BJ (cell line): ENCODE measurements at regions of chr1 and their contacts with region 1.

Region 1: GRCh38 chr1:37449936-37450335 is 24.4 kb upstream of the ZC3H12A start:
- DNase-seq: no peak
- H3K4me3 ChIP-seq: no peak overlapping the region
- H3K27me3 ChIP-seq: no peaks in the 10 kb centered on the region
- CTCF ChIP-seq: no peak

Region 2: DNA sequence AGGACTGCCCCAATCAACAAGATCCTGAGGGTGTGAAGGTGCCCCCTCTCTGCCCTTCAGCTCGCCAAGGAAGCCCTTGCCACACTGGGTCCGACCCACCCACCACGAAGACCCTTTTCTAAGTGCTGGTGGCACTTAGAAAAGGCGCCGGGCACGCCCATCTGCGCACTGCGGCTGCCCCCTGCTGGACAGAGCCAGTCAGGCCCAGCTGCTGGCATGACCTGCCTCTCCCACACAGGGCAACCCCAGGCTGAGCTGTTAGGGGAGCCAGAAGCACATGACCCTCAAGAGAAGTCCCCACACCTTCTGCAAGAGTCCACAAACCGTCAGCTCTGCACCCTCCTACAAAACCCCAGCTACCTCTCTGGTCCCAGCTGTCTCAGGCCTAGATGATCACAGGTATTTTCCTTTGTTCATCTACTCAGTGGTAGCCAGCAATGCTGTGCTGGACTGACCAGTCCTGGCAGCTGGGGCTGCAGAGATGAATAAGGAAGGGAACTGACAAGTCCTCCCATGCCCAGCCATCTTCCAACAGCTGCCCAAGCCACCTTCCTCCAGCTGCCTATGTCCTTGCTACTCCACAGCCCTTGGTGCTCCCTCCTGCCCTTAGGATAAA is 15.5 kb before region 1 on chr1:
- CTCF ChIA-PET with region 1: interaction called, 31 read pairs
- POLR2A ChIA-PET with region 1: no interaction called
- DNase-seq: no peak
- H3K4me3 ChIP-seq: no peak overlapping the region
- H3K27me3 ChIP-seq: peaks cover 9% of the 10 kb centered on the region
- CTCF ChIP-seq: peak; percentile 97

Region 3: GRCh38 chr1:37465593-37466517 is 15.9 kb after region 1 on chr1:
- CTCF ChIA-PET with region 1: interaction called, 41 read pairs
- POLR2A ChIA-PET with region 1: no interaction called
- DNase-seq: no peak
- H3K4me3 ChIP-seq: no peak overlapping the region
- H3K27me3 ChIP-seq: no peaks in the 10 kb centered on the region
- CTCF ChIP-seq: no peak

Region 4: GRCh38 chr1:37682334-37682987 is 232.5 kb after region 1 on chr1:
- CTCF ChIA-PET with region 1: interaction called, 35 read pairs
- POLR2A ChIA-PET with region 1: no interaction called
- DNase-seq: no peak
- H3K4me3 ChIP-seq: no peak overlapping the region
- H3K27me3 ChIP-seq: peaks cover 4% of the 10 kb centered on the region
- CTCF ChIP-seq: peak; percentile 85